Activated CD4-positive, alpha-beta T cell treated with anti-CD3 and anti-CD28 coated beads, Interleukin-2, amount 10 ng/mL, durations not matched to agents 7 days and 5 days (primary cell): ENCODE measurements at regions of chr1 and their contacts with region 1.

Region 1: DNA sequence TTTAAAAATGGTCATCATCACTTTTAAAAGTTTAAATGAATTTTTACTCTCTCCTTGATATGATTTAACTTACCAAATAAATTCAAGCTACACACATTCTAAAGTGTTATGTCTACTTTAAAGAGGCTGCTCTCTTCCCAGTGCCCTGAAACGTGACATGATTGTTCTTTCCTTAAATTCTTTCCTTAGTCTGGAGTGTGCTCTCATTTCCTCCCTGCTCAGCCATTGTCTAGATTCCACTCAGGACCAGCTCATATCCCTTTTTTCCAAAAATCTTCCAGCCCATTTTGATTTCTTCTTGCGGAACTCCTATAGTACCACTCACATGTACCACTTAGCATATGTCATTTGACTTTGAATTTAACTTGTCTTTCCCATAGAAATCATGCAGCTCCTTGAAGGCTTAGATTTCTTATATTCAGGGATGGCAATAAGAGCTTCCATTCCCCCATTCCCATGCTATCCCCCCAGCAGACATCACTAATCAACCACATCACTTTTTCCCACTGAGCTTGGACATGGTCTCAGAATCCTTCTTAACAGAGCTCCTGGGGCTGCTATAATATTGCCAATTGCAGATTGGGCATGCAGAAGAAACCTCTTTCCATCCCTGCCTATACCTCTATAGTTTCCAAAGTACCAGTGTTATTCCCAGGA is 54.7 kb upstream of the ITPKB start:
- DNase-seq: no peak
- H3K4me3 Mint-ChIP-seq: no peak overlapping the region
- H3K27ac Mint-ChIP-seq: no peak overlapping the region
- H3K4me1 Mint-ChIP-seq: peaks cover 15% of the 10 kb centered on the region
- H3K27me3 Mint-ChIP-seq: peaks cover 23% of the 10 kb centered on the region

Region 2: DNA sequence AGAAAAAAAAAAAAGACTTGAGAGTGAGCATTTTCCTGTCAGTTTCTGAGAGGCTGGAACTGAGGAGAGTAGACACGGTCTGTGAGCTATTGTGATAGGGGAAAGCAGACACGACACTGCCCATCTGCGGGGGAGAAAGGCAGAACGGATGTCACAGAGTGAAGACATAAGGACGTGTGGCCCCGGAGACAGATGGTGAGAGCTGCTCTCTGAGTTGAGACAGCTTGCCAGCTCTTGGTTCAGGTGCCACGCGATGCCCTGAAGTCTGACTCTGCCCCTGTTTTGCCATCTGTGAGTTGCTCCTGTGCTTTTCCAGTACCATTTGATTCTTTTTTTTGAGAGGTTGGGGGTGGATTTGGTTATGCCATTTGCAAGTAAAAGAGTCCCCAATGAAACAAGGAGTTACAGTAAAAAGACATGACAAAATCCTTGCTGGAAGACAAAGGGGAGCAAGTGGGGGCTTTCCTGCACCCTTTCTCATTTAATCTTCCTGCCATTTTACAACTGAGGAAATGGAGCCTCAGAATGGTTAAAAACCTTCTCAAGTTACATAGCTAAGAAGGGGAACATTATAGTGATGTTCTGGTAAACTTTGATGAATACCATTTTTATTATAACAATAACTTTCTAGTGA is 1993.1 kb before region 1 on chr1:
- CTCF ChIA-PET with region 1: no interaction called
- POLR2A ChIA-PET with region 1: no interaction called
- DNase-seq: no peak
- H3K4me3 Mint-ChIP-seq: no peak overlapping the region
- H3K27ac Mint-ChIP-seq: no peak overlapping the region
- H3K4me1 Mint-ChIP-seq: peaks cover 2% of the 10 kb centered on the region
- H3K27me3 Mint-ChIP-seq: no peaks in the 10 kb centered on the region

Region 3: DNA sequence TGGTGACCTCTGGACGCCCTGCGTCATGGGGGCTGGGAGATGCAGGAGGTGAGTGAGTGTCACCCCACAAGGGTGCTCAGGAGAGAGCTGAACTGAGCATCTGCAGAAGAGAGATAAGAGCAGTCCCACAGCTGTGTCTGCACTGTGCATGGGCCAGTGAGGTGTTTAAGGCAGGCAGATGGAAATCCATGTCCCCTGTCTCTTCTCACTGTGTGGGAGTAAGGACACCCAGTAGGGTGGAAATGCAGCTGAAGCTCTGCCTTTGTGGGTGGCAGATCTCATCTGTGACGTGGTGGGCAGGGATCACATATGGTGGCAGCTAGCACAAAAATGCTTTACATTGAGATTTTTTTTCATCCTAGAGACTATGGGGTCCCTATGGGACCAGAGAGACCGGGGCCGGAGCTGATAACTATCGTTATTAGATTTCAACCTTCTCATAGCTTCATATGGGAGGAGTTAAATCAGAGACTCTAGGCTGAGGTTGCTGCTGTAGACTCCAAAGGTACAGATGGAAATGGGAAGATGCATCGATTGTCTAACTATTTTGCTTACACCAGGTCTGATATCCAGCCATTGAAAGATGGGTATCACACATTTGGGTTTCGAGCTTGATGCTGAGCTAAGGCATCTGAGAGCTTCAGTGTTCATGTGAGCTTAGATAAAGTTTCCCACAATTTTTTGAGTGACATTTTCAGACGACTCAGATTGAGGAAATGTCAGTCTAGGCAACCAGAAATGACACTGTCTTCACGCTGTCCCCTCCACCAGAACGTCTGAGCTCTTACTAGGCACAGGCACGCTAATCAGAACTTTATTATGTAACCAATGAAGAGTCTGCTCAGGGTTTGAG is 11.4 kb after region 1 on chr1:
- CTCF ChIA-PET with region 1: interaction called, 11 read pairs
- POLR2A ChIA-PET with region 1: no interaction called
- DNase-seq: no peak
- H3K4me3 Mint-ChIP-seq: no peak overlapping the region
- H3K27ac Mint-ChIP-seq: peak overlapping the region; percentile 16
- H3K4me1 Mint-ChIP-seq: peaks cover 8% of the 10 kb centered on the region
- H3K27me3 Mint-ChIP-seq: no peaks in the 10 kb centered on the region